ENCODE measurements at regions of chr15 and their contacts with region 1.

Region 1: GRCh38 chr15:70763120-70763878 is at the start of gene UACA:
- DNase-seq: peak; percentile 98
- H3K4me3 ChIP-seq: peak within 1 kb of the TSS; percentile 87 to 89
- H3K27ac ChIP-seq: peak within 1 kb of the TSS; percentile 92 to 96
- H3K4me1 ChIP-seq: peaks cover 8% of the 10 kb centered on the region
- H3K27me3 ChIP-seq: no peaks in the 10 kb centered on the region
- CTCF ChIP-seq: no peak
- POLR2A ChIP-seq: peak; percentile 93
- total RNA-seq, gene UACA: 56.9 to 65.1 TPM

Region 2: GRCh38 chr15:70815644-70816043 is 52.3 kb after region 1 on chr15:
- intact Hi-C with region 1: loop called (anchors 10 kb)
- DNase-seq: no peak
- H3K4me3 ChIP-seq: no peak overlapping the region
- H3K27ac ChIP-seq: no peak overlapping the region
- H3K4me1 ChIP-seq: no peaks in the 10 kb centered on the region
- H3K27me3 ChIP-seq: no peaks in the 10 kb centered on the region
- CTCF ChIP-seq: no peak
- POLR2A ChIP-seq: no peak